Common myeloid progenitor, CD34-positive (primary cell): ENCODE measurements at regions of chr2 and their contacts with region 1.

Region 1: GRCh38 chr2:191218292-191218898 is 26.8 kb upstream of the MYO1B start:
- DNase-seq: peak; percentile 73 to 87 (median 83)
- H3K4me3 ChIP-seq: no peak overlapping the region
- H3K27ac ChIP-seq: no peak overlapping the region
- H3K4me1 ChIP-seq: peaks cover 0 to 9% (median 7%) of the 10 kb centered on the region in 4 experiments
- H3K27me3 ChIP-seq: no peaks in the 10 kb centered on the region

Region 2: GRCh38 chr2:190507135-190507534 is 711.3 kb before region 1 on chr2:
- CTCF ChIA-PET with region 1: no interaction called
- POLR2A ChIA-PET with region 1: no interaction called
- DNase-seq: no peak
- H3K4me3 ChIP-seq: no peak overlapping the region
- H3K27ac ChIP-seq: peak overlapping the region in 1 of 2 experiments; percentile 1
- H3K4me1 ChIP-seq: peaks cover 0 to 8% (median 0%) of the 10 kb centered on the region in 4 experiments
- H3K27me3 ChIP-seq: no peaks in the 10 kb centered on the region

Region 3: DNA sequence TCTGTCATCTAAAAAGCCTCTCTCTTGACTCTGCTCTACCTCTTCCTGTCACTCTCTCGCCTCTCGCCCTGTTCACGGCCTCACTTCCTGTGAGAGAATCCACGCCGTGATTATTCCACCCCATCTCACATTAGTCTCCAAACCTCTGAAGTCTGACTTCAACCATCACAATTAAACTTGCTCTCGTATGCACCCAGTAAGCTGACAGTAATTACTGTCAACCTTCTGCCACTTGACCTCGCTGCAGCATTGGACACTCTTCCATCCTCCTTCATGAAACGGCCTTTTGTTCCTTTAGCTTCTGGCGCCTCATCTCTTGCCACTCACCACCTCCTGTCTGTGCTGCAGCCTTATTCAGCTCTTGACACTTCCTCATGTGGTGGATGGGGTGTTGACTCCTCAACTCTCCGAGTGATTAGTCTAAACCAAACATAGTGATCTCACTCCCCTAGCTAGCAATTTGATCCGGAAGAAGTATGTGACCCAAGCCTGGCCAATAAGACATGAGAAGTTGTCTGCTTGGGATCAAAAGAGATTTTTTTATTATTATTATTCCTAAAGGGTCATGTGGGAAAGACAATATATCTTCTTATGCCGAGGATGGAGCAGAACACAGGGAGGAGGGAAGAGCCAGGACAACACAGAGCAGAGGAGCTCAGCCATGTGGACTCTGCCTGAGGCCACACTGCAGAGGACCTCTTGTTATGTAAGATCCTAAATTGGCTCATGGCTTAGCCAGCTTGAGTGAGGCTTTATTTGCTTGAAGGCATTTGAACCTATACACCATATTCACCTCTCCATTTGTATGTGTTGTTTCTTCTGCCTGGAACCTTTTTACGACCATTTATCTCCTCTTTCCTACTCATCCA is 11.5 kb before region 1 on chr2:
- CTCF ChIA-PET with region 1: interaction called, 10 read pairs
- POLR2A ChIA-PET with region 1: no interaction called
- DNase-seq: no peak
- H3K4me3 ChIP-seq: no peak overlapping the region
- H3K27ac ChIP-seq: no peak overlapping the region
- H3K4me1 ChIP-seq: peaks cover 0 to 7% (median 3%) of the 10 kb centered on the region in 4 experiments
- H3K27me3 ChIP-seq: no peaks in the 10 kb centered on the region

Region 4: DNA sequence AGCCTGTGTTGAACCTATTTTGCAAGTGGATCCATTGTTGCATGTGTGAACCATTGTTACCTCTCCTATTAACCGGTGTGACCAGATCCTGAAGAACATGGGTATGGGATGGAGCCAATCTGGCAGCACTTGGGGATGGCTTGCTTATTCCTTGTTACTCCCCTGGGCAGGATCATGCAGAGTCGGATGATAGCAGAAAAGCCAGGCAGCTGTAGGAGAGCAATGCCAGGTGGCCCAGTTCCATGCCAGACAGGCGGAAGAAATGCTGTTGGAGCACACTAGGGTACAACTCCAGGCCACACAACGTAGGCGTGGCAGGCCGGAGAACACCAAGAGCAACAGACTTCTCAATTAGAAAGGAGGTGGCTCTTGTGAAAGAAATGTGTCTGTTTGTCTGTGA is 10.5 kb after region 1 on chr2:
- CTCF ChIA-PET with region 1: interaction called, 11 read pairs
- POLR2A ChIA-PET with region 1: no interaction called
- DNase-seq: no peak
- H3K4me3 ChIP-seq: no peak overlapping the region
- H3K27ac ChIP-seq: no peak overlapping the region
- H3K4me1 ChIP-seq: no peaks in the 10 kb centered on the region
- H3K27me3 ChIP-seq: no peaks in the 10 kb centered on the region

Region 5: DNA sequence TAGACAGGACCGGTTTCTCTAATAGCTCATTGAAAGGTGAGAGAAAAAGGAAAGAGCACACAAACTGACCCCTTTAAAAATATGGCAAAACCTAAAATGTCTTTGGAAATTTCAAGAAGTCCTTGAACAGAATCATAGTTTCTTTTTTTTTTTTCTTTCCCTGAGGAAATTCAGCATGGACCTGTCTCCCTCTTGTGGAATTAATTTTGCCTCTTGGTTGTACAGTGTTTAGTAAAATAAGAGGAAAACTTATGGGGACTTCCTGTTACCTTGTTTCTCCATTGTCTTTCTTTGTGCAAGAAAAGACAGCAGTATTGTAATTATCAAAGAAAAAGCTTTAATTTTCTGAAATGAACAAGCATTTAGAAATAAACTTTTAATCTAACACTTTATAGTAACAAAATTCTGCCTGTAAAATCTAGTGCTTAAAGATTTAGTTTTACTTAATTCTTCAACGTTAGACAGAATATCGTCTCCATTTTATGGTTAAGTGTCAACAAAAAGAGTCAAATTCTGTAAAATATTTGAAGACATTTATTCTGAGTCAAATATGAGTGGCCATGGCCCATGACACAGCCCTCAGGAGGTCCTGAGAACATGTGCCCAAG is 283.3 kb after region 1 on chr2:
- CTCF ChIA-PET with region 1: interaction called, 40 read pairs
- POLR2A ChIA-PET with region 1: no interaction called
- DNase-seq: peak; percentile 18 to 28 (median 20)
- H3K4me3 ChIP-seq: no peak overlapping the region
- H3K27ac ChIP-seq: no peak overlapping the region
- H3K4me1 ChIP-seq: no peaks in the 10 kb centered on the region
- H3K27me3 ChIP-seq: no peaks in the 10 kb centered on the region